ENCODE measurements at regions of chr12 and their contacts with region 1.

Region 1: GRCh38 chr12:57309420-57309819 is 58.4 kb upstream of the STAC3 start:
- DNase-seq: no peak
- H3K4me3 ChIP-seq: no peak overlapping the region
- H3K27ac ChIP-seq: peak overlapping the region in 1 of 2 experiments; percentile 52; a peak in 3 of 4 replicates
- H3K4me1 ChIP-seq: peaks cover 0 to 14% of the 10 kb centered on the region in 2 experiments; a peak in 1 of 4 replicates
- H3K27me3 ChIP-seq: no peaks in the 10 kb centered on the region
- CTCF ChIP-seq: no peak
- EP300 ChIP-seq: no peak
- RAD21 ChIP-seq: no peak

Region 2: DNA sequence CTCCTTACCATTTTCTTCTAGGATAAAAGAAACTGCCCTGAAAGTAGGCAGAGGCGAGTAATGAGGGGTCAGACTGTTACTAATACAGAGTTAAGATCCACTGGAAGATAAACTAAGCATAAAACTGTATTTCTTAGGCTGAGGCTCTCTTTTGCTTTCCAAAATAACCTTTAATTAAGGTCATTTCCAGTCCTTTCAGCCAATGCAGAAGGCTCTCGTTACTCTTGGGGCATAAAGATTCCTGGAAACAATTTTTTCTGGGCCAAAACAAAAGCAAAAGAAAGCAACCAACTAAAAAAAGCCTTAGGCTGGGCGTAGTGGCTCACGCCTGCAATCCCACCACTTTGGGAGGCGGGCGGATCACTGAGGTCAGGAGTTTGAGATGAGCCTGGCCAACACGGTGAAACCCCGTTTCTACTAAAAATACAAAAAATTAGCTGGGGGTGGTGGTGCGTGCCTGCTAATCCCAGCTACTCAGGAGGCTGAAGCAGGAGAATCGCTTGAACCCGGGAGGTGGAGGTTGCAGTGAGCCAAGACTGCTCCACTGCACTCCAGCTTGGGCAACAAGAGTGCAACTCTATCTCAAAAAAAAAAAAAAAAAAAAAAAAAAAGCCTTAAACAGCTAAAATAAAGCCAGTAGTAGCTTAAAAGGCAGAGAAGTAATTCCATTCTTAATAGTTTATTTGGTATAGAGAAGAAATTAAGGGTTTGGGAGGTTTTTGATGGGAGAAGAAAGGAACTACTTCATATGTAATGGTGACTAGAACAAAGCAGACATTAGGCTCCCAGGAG is 10.5 kb after region 1 on chr12:
- CTCF ChIA-PET with region 1: interaction called, 26 read pairs
- POLR2A ChIA-PET with region 1: no interaction called
- DNase-seq: no peak
- H3K4me3 ChIP-seq: no peak overlapping the region
- H3K27ac ChIP-seq: peak overlapping the region in 1 of 2 experiments; percentile 47; a peak in 2 of 4 replicates
- H3K4me1 ChIP-seq: 0 out of 4 replicates have a peak, but pooled peaks cover 0 to 3% of the 10 kb centered on the region in 2 experiments
- H3K27me3 ChIP-seq: no peaks in the 10 kb centered on the region
- CTCF ChIP-seq: no peak
- EP300 ChIP-seq: no peak
- RAD21 ChIP-seq: no peak

Region 3: GRCh38 chr12:57401165-57401564 is 91.7 kb after region 1 on chr12:
- CTCF ChIA-PET with region 1: interaction called, 11 read pairs
- POLR2A ChIA-PET with region 1: no interaction called
- DNase-seq: no peak
- H3K4me3 ChIP-seq: no peak overlapping the region
- H3K27ac ChIP-seq: no peak overlapping the region
- H3K4me1 ChIP-seq: no peaks in the 10 kb centered on the region
- H3K27me3 ChIP-seq: no peaks in the 10 kb centered on the region
- CTCF ChIP-seq: no peak
- EP300 ChIP-seq: no peak
- RAD21 ChIP-seq: no peak

Measured in SK-N-SH (cell line).